HepG2 (cell line): ENCODE measurements at regions of chr2 and their contacts with region 1.

Region 1: DNA sequence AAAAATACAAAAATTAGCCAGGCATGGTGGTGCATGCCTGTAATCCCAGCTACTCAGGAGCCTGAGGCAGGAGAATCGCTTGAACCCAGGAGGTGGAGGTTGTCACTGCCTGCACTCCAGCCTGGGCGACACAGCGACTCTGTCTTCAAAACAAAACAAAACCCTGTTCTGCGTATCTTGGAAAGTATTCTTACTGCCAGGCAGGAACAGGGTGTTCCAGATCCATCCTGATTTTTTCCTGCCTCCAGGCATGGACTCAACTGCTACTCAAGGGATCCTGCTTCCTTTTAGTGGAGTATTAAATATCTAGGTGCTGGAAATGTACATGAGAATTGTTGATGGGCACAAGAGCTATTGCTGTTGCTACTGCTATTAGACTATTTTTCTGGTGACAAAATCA is 12.3 kb downstream of the HSPD1 start:
- DNase-seq: no peak
- ATAC-seq: no peak
- H3K4me3 ChIP-seq: no peak overlapping the region
- H3K27ac ChIP-seq: no peak overlapping the region
- H3K4me1 ChIP-seq: peaks cover 37% of the 10 kb centered on the region
- H3K27me3 ChIP-seq: no peaks in the 10 kb centered on the region
- CTCF ChIP-seq: no peak
- EP300 ChIP-seq: no peak
- POLR2A ChIP-seq: 0 out of 4 replicates have a peak, but pooled peaks of 1 of the 2 experiments have one; percentile 22
- RAD21 ChIP-seq: no peak

Region 2: GRCh38 chr2:197399887-197400540 is 87.4 kb before region 1 on chr2:
- CTCF ChIA-PET with region 1: no interaction called
- POLR2A ChIA-PET with region 1: no interaction called
- in situ Hi-C with region 1: loop called (anchors 5 kb)
- intact Hi-C with region 1: no loop called
- DNase-seq: no peak
- ATAC-seq: no peak
- H3K4me3 ChIP-seq: no peak overlapping the region
- H3K27ac ChIP-seq: no peak overlapping the region
- H3K4me1 ChIP-seq: no peaks in the 10 kb centered on the region
- H3K27me3 ChIP-seq: no peaks in the 10 kb centered on the region
- CTCF ChIP-seq: no peak
- EP300 ChIP-seq: no peak
- POLR2A ChIP-seq: no peak
- RAD21 ChIP-seq: no peak